ENCODE measurements at regions of chr1 and their contacts with region 1.

Region 1: GRCh38 chr1:47449822-47450552 is 12.1 kb downstream of the FOXD2 start:
- DNase-seq: no peak
- H3K4me3 ChIP-seq: no peak overlapping the region
- H3K27ac ChIP-seq: no peak overlapping the region
- H3K4me1 ChIP-seq: no peaks in the 10 kb centered on the region
- H3K27me3 ChIP-seq: peaks cover 24% of the 10 kb centered on the region
- CTCF ChIP-seq: peak; percentile 32 to 64

Region 2: GRCh38 chr1:47388891-47389238 is 61.1 kb before region 1 on chr1:
- CTCF ChIA-PET with region 1: no interaction called
- dilution Hi-C with region 1: no loop called
- in situ Hi-C with region 1: no loop called
- intact Hi-C with region 1: no loop called
- DNase-seq: peak; percentile 56
- H3K4me3 ChIP-seq: no peak overlapping the region
- H3K27ac ChIP-seq: no peak overlapping the region
- H3K4me1 ChIP-seq: no peaks in the 10 kb centered on the region
- H3K27me3 ChIP-seq: no peaks in the 10 kb centered on the region
- CTCF ChIP-seq: peak; percentile 87 to 89

Region 3: DNA sequence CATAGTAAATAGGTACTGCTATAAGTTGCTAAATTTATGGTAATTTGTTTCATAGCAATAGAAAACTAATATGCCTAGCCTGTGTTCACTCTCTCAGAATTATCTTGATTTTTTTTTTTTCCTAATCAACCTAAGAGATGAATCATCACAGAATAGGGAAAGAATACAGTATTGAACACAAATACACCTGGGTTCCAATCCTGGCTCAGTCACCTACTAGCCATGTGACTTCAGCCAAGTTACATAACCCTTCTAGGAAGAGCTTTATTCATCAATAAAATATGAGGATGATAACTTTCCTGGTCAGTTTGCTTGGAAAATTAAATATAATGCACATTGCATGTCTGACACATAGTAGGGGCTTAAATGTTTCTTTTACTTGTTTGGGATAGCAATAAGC is 267.4 kb after region 1 on chr1:
- CTCF ChIA-PET with region 1: no interaction called
- dilution Hi-C with region 1: loop called (anchors 5 kb)
- in situ Hi-C with region 1: loop called in 1 of 2 experiments (anchors 10 kb)
- intact Hi-C with region 1: no loop called
- DNase-seq: no peak
- H3K4me3 ChIP-seq: no peak overlapping the region
- H3K27ac ChIP-seq: no peak overlapping the region
- H3K4me1 ChIP-seq: peaks cover 5% of the 10 kb centered on the region
- H3K27me3 ChIP-seq: peaks cover 7% of the 10 kb centered on the region
- CTCF ChIP-seq: no peak

Measured in mammary epithelial cell (primary cell).